ENCODE measurements at regions of chr4 and their contacts with region 1.

Region 1: GRCh38 chr4:93199492-93199891 is 629.1 kb upstream of the ATOH1 start:
- DNase-seq: peak; percentile 20
- CTCF ChIP-seq: peak; percentile 12

Region 2: DNA sequence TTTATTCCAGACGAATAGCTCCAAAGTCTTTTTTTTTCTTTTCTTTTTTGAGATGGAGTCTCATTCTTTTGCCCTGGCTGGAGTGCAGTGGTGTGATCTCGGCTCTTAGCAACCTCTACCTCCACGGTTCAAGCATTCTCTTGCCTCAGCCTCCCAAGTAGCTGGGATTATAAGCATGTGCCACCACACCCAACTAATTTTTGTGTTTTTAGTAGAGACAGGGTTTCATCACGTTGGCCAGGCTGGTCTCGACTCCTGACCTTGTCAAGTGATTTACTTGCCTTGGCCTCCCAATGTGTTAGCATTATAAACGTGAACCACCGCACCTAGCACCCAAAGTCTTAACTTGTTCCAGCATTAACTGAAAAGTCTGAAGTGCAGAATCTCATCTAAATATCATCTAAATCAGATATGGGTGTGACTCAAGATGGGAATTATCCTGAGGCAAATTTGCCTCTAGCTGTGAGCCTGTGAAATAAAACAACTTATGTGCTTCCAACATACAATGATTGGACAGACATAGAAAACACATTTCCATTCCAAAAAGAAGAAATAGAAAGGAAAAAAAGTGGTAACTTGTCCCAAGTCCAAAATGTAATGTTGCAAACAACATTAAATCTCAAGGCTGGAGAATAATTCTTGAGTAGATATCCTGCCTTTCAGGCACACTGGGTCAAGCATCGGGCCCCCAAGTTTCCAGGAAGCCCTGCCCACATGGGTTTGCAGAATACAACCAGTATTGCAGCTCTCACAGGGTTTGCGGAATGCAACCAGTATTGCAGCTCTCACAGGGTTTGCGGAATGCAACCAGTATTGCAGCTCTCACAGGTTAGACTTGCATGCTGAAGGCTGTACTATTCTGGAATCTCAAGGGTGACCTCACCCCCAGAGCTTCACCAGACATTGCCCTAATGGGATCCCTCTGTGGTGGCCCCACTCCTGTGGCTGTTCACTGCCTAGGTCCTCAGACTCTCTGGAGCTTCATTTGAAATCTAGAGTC is 11.9 kb before region 1 on chr4:
- CTCF ChIA-PET with region 1: interaction called, 10 read pairs
- POLR2A ChIA-PET with region 1: no interaction called
- DNase-seq: no peak
- CTCF ChIP-seq: no peak

Region 3: GRCh38 chr4:93437991-93438390 is 238.5 kb after region 1 on chr4:
- CTCF ChIA-PET with region 1: no interaction called
- POLR2A ChIA-PET with region 1: no interaction called
- DNase-seq: no peak
- CTCF ChIP-seq: no peak